CD8-positive, alpha-beta memory T cell (primary cell): ENCODE measurements at regions of chr16 and their contacts with region 1.

Region 1: DNA sequence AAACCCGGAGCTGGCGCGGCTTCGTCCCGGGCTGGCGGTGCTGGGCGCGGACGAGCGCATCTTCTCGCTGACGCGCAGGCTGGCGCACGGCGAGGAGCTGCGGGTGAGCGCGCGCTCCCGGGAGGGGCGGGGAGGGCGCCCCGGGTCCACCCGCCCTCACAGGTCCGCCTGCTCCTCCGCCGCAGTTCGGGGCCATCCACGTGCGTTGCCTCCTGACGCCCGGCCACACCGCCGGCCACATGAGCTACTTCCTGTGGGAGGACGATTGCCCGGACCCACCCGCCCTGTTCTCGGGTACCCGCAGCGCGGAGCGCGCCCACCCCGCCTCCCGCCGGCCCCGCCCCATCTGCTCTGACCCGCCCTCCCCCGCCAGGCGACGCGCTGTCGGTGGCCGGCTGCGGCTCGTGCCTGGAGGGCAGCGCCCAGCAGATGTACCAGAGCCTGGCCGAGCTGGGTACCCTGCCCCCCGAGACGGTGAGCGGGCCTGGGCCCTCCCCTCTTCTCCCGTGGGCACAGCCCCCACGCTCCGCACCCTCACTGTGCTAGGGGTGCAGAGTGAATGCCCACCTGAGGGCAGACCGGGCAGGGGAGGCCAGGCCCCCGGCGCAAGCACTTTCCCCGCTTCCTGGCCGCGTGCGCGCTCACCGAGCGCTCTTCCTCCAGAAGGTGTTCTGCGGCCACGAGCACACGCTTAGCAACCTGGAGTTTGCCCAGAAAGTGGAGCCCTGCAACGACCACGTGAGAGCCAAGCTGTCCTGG is 1.4 kb downstream of the HAGHL start:
- DNase-seq: peak; percentile 57 to 81 (median 68)
- H3K4me3 ChIP-seq: no peak overlapping the region
- H3K4me3 Mint-ChIP-seq: peak overlapping the region in 6 of 7 donors; percentile 38 to 74 (median 52)
- H3K27ac ChIP-seq: peak overlapping the region; percentile 38
- H3K27ac Mint-ChIP-seq: peak overlapping the region in 3 of 8 donors; percentile 27 to 53 (median 52)
- H3K4me1 ChIP-seq: peaks cover 6% of the 10 kb centered on the region
- H3K4me1 Mint-ChIP-seq: peaks cover 0 to 16% (median 0%) of the 10 kb centered on the region in 3 donors
- H3K27me3 ChIP-seq: no peaks in the 10 kb centered on the region
- H3K27me3 Mint-ChIP-seq: no peaks in the 10 kb centered on the region

Region 2: GRCh38 chr16:714558-715476 is 13.5 kb before region 1 on chr16 and contains the start of gene METRN:
- CTCF ChIA-PET with region 1: interaction called, 332 read pairs
- POLR2A ChIA-PET with region 1: interaction called, 53 read pairs
- DNase-seq: peak; percentile 84 to 90 (median 88)
- H3K4me3 ChIP-seq: no peak within 1 kb of the TSS
- H3K4me3 Mint-ChIP-seq: peak within 1 kb of the TSS; percentile 56 to 88 (median 58)
- H3K27ac ChIP-seq: no peak within 1 kb of the TSS
- H3K27ac Mint-ChIP-seq: peak within 1 kb of the TSS in 1 of 8 donors; percentile 54
- H3K4me1 ChIP-seq: peaks cover 14% of the 10 kb centered on the region
- H3K4me1 Mint-ChIP-seq: peaks cover 11 to 25% (median 16%) of the 10 kb centered on the region in 3 donors
- H3K27me3 ChIP-seq: peaks cover 13% of the 10 kb centered on the region
- H3K27me3 Mint-ChIP-seq: peaks cover 0 to 13% of the 10 kb centered on the region in 2 donors
- total RNA-seq, gene METRN: 34.8 to 38.2 TPM

Region 3: DNA sequence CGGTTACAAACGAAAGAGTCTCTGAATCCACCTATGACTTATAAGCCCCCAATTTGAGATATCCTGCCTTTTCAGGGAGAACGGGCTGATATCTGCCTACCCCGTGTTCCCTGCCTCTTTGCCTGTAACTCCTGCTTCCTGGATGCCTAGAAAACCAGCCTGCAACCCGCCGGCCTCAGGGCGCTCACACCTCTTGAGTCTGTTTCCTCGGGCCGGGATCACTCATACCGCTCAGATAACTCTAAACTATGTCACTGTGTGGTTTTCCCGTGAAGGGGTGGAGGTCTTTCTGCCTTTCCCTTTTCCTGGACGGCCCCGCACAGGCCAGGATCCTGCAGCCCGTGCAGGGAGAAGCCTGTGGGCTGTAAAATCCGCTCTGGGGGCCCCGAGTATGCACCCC is 49.5 kb after region 1 on chr16:
- CTCF ChIA-PET with region 1: no interaction called
- POLR2A ChIA-PET with region 1: no interaction called
- DNase-seq: no peak
- H3K4me3 ChIP-seq: no peak overlapping the region
- H3K4me3 Mint-ChIP-seq: no peak overlapping the region
- H3K27ac ChIP-seq: no peak overlapping the region
- H3K27ac Mint-ChIP-seq: peak overlapping the region in 1 of 8 donors; percentile 35
- H3K4me1 ChIP-seq: no peaks in the 10 kb centered on the region
- H3K4me1 Mint-ChIP-seq: peaks cover 0 to 3% (median 0%) of the 10 kb centered on the region in 3 donors
- H3K27me3 ChIP-seq: no peaks in the 10 kb centered on the region
- H3K27me3 Mint-ChIP-seq: peaks cover 6 to 15% of the 10 kb centered on the region in 2 donors

Region 4: DNA sequence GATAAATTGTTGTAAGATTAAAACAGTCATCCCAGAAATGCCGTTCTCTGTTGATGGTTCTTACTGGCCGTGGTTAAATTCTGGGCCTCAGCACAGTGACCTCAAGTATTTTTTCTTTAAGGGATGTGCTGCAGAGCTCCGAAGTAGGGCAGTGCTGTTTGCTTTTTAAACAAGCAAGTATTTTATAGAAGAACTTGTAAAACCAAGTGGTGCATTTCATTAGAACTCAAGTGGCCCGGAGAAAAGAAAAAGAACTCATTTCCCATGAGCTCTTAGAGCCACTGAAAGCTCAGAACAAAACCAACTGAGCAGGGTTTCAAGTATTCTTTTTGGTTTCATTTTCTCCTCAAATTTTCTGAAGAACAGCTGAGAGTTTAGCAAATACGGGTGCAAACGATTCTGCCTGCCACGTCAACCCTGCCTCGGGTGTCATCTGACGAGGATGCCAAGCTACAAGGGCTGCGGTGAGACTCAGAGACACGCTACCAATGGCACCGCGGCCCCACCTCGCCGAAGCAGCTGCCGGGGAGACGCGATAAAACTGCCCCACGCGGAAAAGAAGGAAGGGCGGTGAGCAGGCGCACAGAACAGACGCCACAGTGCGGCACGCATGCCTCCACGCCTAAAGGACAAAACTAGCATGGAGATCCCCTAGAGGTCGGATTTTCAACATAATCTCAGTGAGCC is 236.2 kb after region 1 on chr16:
- CTCF ChIA-PET with region 1: no interaction called
- POLR2A ChIA-PET with region 1: no interaction called
- DNase-seq: peak in 4 of 5 donors; percentile 48 to 87 (median 60)
- H3K4me3 ChIP-seq: no peak overlapping the region
- H3K4me3 Mint-ChIP-seq: peak overlapping the region; percentile 58 to 89 (median 71)
- H3K27ac ChIP-seq: no peak overlapping the region
- H3K27ac Mint-ChIP-seq: peak overlapping the region; percentile 76 to 95 (median 90)
- H3K4me1 ChIP-seq: peaks cover 16% of the 10 kb centered on the region
- H3K4me1 Mint-ChIP-seq: peaks cover 38 to 64% (median 49%) of the 10 kb centered on the region in 3 donors
- H3K27me3 ChIP-seq: no peaks in the 10 kb centered on the region
- H3K27me3 Mint-ChIP-seq: no peaks in the 10 kb centered on the region